ENCODE measurements at regions of chr9 and their contacts with region 1.

Region 1: GRCh38 chr9:79610791-79611614 is 39.2 kb downstream of the TLE4 start:
- DNase-seq: no peak
- ATAC-seq: peak in 1 of 2 donors; percentile 67
- H3K4me3 ChIP-seq: no peak overlapping the region
- H3K27ac ChIP-seq: peak overlapping the region in 3 of 4 donors; percentile 6 to 57 (median 43)
- H3K4me1 ChIP-seq: peaks cover 49 to 61% of the 10 kb centered on the region in 2 donors
- H3K27me3 ChIP-seq: no peaks in the 10 kb centered on the region
- CTCF ChIP-seq: no peak
- POLR2A ChIP-seq: no peak

Region 2: GRCh38 chr9:79583952-79584654 is 26.9 kb before region 1 on chr9:
- in situ Hi-C with region 1: no loop called
- intact Hi-C with region 1: loop called (anchors 2 kb)
- DNase-seq: peak; percentile 61 to 69
- ATAC-seq: peak; percentile 88 to 91
- H3K4me3 ChIP-seq: peak overlapping the region; percentile 20 to 32 (median 27)
- H3K27ac ChIP-seq: peak overlapping the region; percentile 71 to 79 (median 76)
- H3K4me1 ChIP-seq: peaks cover 57 to 87% of the 10 kb centered on the region in 2 donors
- H3K27me3 ChIP-seq: no peaks in the 10 kb centered on the region
- CTCF ChIP-seq: no peak
- POLR2A ChIP-seq: peak in 1 of 2 donors; percentile 32

Region 3: DNA sequence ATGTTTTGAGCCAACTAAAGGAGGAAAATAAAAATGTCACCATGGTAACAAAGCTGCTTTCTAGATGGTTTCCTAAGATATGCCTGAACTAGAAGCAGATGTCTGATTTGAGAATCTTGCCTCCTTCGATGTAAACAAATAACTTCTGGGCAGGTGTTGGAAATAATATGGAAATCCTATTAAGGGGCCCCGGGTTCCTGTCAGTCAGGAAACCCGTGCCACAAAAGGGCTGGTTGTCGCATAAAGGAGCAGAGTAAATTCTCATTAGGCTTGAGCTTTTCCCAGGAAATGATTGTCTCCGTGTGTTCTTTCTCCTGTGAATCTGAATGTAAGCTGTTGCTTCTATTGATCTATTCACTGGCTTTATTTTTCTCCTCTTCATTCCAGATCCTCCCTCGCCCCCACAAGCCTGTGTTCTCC is 51.5 kb after region 1 on chr9:
- in situ Hi-C with region 1: no loop called
- intact Hi-C with region 1: no loop called
- DNase-seq: no peak
- ATAC-seq: no peak
- H3K4me3 ChIP-seq: no peak overlapping the region
- H3K27ac ChIP-seq: no peak overlapping the region
- H3K4me1 ChIP-seq: peaks cover 21 to 29% of the 10 kb centered on the region in 2 donors
- H3K27me3 ChIP-seq: no peaks in the 10 kb centered on the region
- CTCF ChIP-seq: no peak
- POLR2A ChIP-seq: no peak

Region 4: DNA sequence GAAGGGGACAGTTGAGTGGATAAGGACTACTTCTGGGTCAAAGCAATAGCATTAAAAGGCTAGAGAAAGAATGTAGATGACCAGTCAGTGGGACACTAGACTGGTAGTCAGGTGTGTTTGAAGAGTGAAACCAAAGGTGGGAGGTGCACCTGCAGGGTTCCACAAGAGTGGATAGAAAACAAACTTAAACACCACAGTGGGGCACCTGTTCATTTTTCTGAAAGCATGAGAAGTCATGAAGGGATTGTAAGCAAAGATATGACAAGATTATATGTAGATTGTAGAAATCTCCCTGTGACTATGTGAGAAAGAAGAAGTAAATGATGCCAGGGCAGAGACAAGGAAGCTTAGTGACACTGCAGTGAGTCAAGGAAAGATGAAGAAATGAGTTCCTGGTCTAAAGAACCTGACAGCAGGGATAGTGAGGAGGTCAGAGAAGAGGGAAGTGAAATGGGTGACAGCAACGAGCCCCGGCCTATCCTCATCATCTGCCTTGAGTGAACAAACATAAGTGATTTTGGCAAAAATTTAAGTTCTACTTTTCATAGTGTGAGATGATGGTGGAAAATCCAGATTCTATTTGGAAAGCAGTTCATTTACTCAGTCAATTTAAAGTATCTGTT is 257.7 kb after region 1 on chr9:
- in situ Hi-C with region 1: no loop called
- intact Hi-C with region 1: no loop called
- DNase-seq: no peak
- ATAC-seq: no peak
- H3K4me3 ChIP-seq: no peak overlapping the region
- H3K27ac ChIP-seq: no peak overlapping the region
- H3K4me1 ChIP-seq: no peaks in the 10 kb centered on the region
- H3K27me3 ChIP-seq: no peaks in the 10 kb centered on the region
- CTCF ChIP-seq: no peak
- POLR2A ChIP-seq: no peak